Activated CD8-positive, alpha-beta memory T cell treated with anti-CD3 and anti-CD28 coated beads, Interleukin-2, amount 10 ng/mL, durations not matched to agents 7 days and 5 days (primary cell): ENCODE measurements at regions of chr5 and their contacts with region 1.

Region 1: GRCh38 chr5:177454397-177455035 is 7.9 kb downstream of the PRR7 start:
- DNase-seq: peak; percentile 93
- ATAC-seq: peak; percentile 60
- H3K4me3 Mint-ChIP-seq: peak overlapping the region; percentile 78
- H3K27ac Mint-ChIP-seq: no peak overlapping the region
- H3K4me1 Mint-ChIP-seq: peaks cover 18% of the 10 kb centered on the region
- H3K27me3 Mint-ChIP-seq: peaks cover 5% of the 10 kb centered on the region

Region 2: DNA sequence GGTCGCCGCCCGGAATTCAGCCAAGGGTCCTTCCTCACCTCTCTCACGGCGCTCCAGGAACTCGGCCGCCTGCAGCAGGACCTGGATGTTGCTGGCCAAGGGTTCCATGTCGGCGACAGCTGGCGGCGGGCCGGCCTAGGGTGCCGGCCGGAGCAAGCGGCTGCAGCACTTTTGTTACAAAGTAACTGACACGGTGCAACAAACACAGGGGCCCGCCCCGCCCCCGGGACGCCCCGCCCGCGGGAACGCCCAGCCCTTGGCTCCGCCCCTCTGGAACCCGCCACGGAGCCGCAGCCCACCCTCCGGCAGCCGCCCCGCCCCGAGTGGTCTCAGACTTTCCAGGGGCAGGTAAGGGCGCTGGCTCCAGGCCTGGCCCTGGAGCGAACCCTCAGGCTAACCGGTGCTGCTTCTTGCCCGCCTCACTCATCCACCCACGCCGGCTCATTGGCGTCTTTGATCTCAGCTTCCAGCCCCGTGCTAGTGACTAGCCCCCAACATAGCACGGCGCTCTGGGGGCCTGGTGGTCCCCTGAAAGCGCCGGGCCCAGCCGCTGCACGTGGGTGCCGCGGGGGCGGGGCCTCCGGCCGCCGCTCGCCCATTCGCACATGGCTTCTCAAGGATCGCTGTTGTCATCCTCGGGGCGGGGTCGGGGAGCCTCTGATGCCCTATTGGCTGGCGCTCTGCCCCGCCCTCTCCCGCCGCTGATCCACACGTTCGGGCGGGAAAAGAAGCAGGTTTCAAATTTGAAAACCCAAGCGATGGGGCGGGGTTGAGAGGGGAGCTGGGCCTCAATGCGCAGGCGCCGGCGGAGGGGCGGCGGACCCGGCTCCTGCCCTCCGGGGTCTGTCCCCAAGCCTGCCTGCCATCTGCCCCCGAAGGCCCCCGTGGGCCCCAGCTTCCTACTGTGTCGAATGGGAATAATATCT is 142.5 kb before region 1 on chr5 and contains the start of gene MXD3:
- CTCF ChIA-PET with region 1: interaction called, 31 read pairs
- DNase-seq: peak; percentile 99
- ATAC-seq: peak; percentile 88
- H3K4me3 Mint-ChIP-seq: peak within 1 kb of the TSS; percentile 97
- H3K27ac Mint-ChIP-seq: peak within 1 kb of the TSS; percentile 95
- H3K4me1 Mint-ChIP-seq: peaks cover 52% of the 10 kb centered on the region
- H3K27me3 Mint-ChIP-seq: no peaks in the 10 kb centered on the region
- total RNA-seq, gene MXD3: 60.2 to 117 TPM

Region 3: DNA sequence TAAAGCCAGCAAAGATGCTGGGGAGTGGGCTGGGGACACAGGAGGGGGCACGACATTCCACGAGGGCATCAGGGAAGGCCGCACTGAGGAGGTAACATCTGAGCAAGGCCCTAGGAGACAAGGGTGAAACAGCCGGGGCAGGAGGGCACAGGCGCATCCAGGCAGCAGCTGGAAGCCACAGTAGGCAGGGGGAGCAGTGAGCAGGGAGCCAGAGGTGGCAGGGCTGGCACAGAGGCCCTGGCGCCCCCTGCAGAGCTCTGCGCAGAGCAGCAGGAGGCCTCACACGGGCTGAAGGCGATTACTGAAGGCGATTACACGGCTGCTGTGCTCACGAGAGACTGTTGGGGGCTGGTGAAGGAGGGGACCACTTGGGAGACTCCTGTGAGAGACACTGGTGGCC is 118.4 kb before region 1 on chr5:
- CTCF ChIA-PET with region 1: no interaction called
- DNase-seq: no peak
- ATAC-seq: peak; percentile 63
- H3K4me3 Mint-ChIP-seq: no peak overlapping the region
- H3K27ac Mint-ChIP-seq: no peak overlapping the region
- H3K4me1 Mint-ChIP-seq: peaks cover 27% of the 10 kb centered on the region
- H3K27me3 Mint-ChIP-seq: no peaks in the 10 kb centered on the region

Region 4: GRCh38 chr5:177362610-177363507 is 91.7 kb before region 1 on chr5:
- CTCF ChIA-PET with region 1: interaction called, 53 read pairs
- DNase-seq: peak; percentile 68
- ATAC-seq: peak; percentile 75
- H3K4me3 Mint-ChIP-seq: peak overlapping the region; percentile 74
- H3K27ac Mint-ChIP-seq: peak overlapping the region; percentile 64
- H3K4me1 Mint-ChIP-seq: peaks cover 71% of the 10 kb centered on the region
- H3K27me3 Mint-ChIP-seq: no peaks in the 10 kb centered on the region

Region 5: GRCh38 chr5:177378884-177379883 is 75.3 kb before region 1 on chr5:
- CTCF ChIA-PET with region 1: interaction called, 53 read pairs
- DNase-seq: no peak
- ATAC-seq: peak; percentile 87
- H3K4me3 Mint-ChIP-seq: no peak overlapping the region
- H3K27ac Mint-ChIP-seq: peak overlapping the region; percentile 42
- H3K4me1 Mint-ChIP-seq: peaks cover 17% of the 10 kb centered on the region
- H3K27me3 Mint-ChIP-seq: no peaks in the 10 kb centered on the region

Region 6: DNA sequence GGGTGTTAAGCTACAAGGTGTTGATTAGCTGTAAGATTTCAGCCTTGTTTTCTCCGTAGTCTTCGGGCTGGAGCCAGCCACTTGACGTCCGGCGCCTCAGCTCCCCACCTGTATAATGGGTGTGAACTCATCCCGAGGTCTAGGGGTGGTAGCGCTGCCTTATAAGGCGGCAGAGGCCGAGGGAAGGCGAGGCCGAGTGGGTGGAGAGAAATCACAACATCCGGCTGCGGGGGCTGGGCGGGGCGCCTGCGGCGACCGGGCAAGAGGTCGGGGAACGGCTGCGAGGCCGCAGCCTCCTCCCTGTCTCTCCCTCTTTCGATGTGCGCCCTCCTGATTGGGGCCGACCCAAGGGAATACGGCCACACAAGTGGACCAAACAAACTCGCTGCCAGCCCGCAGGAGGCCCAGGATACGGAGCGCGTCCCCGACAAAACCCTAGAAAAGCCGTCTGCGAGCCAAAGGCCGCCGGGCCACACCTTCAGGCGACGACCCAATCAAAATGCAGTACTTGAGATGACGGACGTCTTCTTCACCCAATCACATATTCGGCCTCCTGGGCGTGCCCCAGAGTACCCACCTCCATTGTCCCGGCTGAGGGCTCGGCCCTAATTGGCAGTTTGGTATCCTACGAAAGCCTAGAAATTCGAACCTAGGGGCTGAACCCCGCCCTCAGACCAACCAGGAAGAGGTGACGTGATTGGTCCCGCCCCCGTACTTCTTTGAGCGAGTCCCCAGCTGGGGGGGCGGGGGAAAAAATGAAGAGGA is 28.5 kb before region 1 on chr5:
- CTCF ChIA-PET with region 1: interaction called, 142 read pairs
- DNase-seq: peak; percentile 100
- ATAC-seq: peak; percentile 87
- H3K4me3 Mint-ChIP-seq: peak overlapping the region; percentile 85
- H3K27ac Mint-ChIP-seq: peak overlapping the region; percentile 98
- H3K4me1 Mint-ChIP-seq: peaks cover 45% of the 10 kb centered on the region
- H3K27me3 Mint-ChIP-seq: no peaks in the 10 kb centered on the region

Region 7: DNA sequence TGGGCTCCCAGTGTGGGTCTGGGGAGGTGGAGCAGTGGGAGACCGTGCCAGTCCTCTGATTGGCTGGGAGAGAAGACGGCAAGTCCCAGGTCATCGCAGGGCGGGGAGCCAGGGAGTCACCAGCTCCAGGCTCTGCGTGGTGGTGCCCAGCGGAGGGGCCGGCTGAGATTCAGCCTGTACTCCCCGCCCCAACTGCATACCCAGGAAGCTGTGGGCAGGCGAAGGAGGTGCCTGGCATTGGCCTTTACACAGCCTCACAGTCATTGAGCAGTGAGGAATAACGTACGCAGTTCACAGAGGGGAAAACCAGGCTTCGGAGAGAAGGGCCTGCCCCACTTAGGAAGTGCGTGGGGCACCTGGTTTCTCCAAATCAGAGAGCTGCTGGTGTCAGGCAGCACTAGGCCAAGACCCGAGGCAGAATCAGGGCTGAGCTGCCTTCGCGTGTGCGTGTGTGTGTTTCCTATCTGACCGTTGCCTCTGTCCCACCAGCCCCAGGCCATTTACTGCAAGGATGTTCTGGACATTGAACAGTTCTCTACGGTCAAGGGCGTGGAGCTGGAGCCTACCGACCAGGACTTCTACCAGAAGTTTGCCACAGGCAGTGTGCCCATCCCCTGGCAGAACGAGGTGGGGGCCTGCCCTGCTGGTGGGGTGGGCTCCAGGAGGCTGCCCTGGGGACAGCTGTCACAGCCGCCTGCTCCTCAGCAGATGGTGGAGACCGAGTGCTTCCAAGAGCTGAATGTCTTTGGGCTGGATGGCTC is 14.1 kb before region 1 on chr5:
- CTCF ChIA-PET with region 1: interaction called, 64 read pairs
- DNase-seq: peak; percentile 41
- ATAC-seq: no peak
- H3K4me3 Mint-ChIP-seq: no peak overlapping the region
- H3K27ac Mint-ChIP-seq: no peak overlapping the region
- H3K4me1 Mint-ChIP-seq: peaks cover 33% of the 10 kb centered on the region
- H3K27me3 Mint-ChIP-seq: no peaks in the 10 kb centered on the region

Region 8: GRCh38 chr5:177478711-177479646 is 24.5 kb after region 1 on chr5:
- CTCF ChIA-PET with region 1: interaction called, 35 read pairs
- DNase-seq: peak; percentile 67
- ATAC-seq: peak; percentile 75
- H3K4me3 Mint-ChIP-seq: no peak overlapping the region
- H3K27ac Mint-ChIP-seq: peak overlapping the region; percentile 90
- H3K4me1 Mint-ChIP-seq: peaks cover 45% of the 10 kb centered on the region
- H3K27me3 Mint-ChIP-seq: no peaks in the 10 kb centered on the region